ENCODE measurements at regions of chr5 and their contacts with region 1.

Region 1: GRCh38 chr5:127981498-127981897 is 102.1 kb upstream of the SLC12A2 start:
- DNase-seq: no peak
- ATAC-seq: no peak
- H3K4me3 ChIP-seq: no peak overlapping the region
- H3K27ac ChIP-seq: no peak overlapping the region
- H3K4me1 ChIP-seq: peaks cover 21% of the 10 kb centered on the region
- H3K27me3 ChIP-seq: no peaks in the 10 kb centered on the region
- CTCF ChIP-seq: no peak

Region 2: GRCh38 chr5:127941646-127942045 is 39.9 kb before region 1 on chr5:
- CTCF ChIA-PET with region 1: no interaction called
- POLR2A ChIA-PET with region 1: no interaction called
- intact Hi-C with region 1: loop called (anchors 2 kb)
- DNase-seq: peak; percentile 58
- ATAC-seq: peak; percentile 78
- H3K4me3 ChIP-seq: peak overlapping the region; percentile 36
- H3K27ac ChIP-seq: peak overlapping the region; percentile 83
- H3K4me1 ChIP-seq: peaks cover 44% of the 10 kb centered on the region
- H3K27me3 ChIP-seq: no peaks in the 10 kb centered on the region
- CTCF ChIP-seq: no peak

Region 3: DNA sequence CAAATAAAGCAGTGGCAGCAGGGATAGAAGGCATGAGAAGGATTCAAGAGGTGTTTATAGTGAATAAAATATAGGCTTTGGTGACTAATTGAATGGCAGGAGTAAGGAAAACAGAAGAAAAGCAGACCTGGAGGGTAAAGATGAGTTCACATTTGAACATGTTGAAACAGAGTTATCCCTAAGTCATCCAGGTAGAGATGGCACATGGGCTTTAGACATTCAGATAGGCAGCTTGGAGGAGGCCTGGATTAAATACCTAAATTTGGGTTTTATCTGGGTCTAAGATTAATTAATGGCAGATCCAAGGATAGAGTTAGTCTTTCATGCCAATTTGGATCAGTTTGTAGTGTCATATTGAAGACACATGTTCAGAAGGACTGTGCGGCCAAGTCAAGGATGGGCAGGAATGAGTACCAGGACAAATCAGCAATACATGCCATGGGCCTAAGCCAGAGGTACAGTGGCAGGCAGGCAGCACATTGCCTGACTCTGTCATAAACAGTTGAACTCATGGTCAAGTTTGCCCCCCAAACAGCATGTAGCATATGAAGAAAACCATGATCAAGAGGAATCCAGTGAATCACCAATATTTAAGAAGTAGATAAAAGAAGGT is 13.4 kb before region 1 on chr5:
- CTCF ChIA-PET with region 1: no interaction called
- POLR2A ChIA-PET with region 1: no interaction called
- intact Hi-C with region 1: loop called (anchors 1 kb)
- DNase-seq: no peak
- ATAC-seq: peak; percentile 61; the same call in 1 of the 2 replicates
- H3K4me3 ChIP-seq: no peak overlapping the region
- H3K27ac ChIP-seq: peak overlapping the region; percentile 94
- H3K4me1 ChIP-seq: peaks cover 23% of the 10 kb centered on the region
- H3K27me3 ChIP-seq: no peaks in the 10 kb centered on the region
- CTCF ChIP-seq: no peak

Measured in PC-3 (cell line).